ENCODE measurements at regions of chr7 and their contacts with region 1.

Region 1: DNA sequence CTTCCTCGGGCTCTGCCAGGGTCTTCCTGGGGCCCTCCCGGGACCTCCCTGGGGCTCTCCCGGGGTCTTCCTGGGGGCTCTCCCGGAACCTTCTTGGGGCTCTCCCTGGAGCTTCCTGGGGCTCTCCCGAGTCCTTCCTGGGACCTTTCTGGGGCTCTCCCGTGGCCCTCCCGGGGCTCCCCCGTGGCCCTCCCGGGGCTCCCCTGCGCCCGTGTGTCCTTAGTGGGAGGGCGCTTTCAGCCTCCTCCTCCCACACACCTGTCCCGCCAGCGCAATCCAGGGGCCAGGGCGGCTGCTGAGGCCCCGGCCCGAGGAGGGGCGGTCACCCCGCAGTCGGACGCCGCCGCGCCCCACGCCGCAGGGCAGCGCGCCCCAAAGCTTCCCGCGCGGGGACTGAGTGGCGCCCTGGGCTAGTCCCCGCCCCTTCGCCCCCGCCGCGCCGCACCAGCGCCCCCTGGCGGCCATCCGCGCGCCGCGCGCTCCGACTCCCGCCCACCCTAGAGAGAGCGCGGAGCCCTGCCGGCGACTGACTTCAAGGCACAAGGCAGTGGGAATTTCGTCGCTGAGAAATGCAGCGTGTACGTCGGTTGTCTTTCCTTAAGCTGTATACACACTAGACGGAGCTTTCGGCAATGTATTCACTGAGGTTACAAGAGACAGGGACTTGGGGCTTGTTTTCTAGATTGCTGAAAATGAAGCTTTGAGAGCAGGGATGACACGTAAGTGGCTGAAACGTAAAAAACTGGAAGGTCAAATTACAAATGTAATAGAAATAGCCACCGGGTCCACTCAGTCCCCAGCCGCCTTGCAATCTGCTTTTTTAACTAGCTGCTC is 47.1 kb downstream of the INSIG1 start:
- DNase-seq: peak; percentile 82 to 84 (median 83)
- ATAC-seq: peak; percentile 93 to 99 (median 97)
- H3K4me3 ChIP-seq: peak overlapping the region; percentile 32 to 56 (median 49)
- H3K27ac ChIP-seq: no peak overlapping the region
- H3K4me1 ChIP-seq: peaks cover 0 to 10% (median 0%) of the 10 kb centered on the region in 4 donors
- H3K27me3 ChIP-seq: no peaks in the 10 kb centered on the region
- CTCF ChIP-seq: peak; percentile 78 to 97 (median 88)
- POLR2A ChIP-seq: no peak

Region 2: GRCh38 chr7:154913638-154914312 is 431.0 kb before region 1 on chr7:
- intact Hi-C with region 1: loop called (anchors 5 to 10 kb)
- DNase-seq: peak; percentile 91 to 93 (median 91)
- ATAC-seq: peak; percentile 97 to 100 (median 99)
- H3K4me3 ChIP-seq: peak overlapping the region in 2 of 3 donors; percentile 10 to 15
- H3K27ac ChIP-seq: no peak overlapping the region
- H3K4me1 ChIP-seq: peaks cover 0 to 9% (median 0%) of the 10 kb centered on the region in 4 donors
- H3K27me3 ChIP-seq: no peaks in the 10 kb centered on the region
- CTCF ChIP-seq: peak; percentile 91 to 96 (median 92)
- POLR2A ChIP-seq: no peak

Region 3: GRCh38 chr7:155190688-155191087 is 154.1 kb before region 1 on chr7:
- intact Hi-C with region 1: loop called (anchors 5 to 10 kb)
- DNase-seq: peak in 2 of 3 donors; percentile 59 to 67
- ATAC-seq: peak; percentile 91 to 98 (median 96)
- H3K4me3 ChIP-seq: peak overlapping the region in 2 of 3 donors; percentile 15 to 38
- H3K27ac ChIP-seq: no peak overlapping the region
- H3K4me1 ChIP-seq: peaks cover 0 to 9% (median 0%) of the 10 kb centered on the region in 4 donors
- H3K27me3 ChIP-seq: no peaks in the 10 kb centered on the region
- CTCF ChIP-seq: peak; percentile 77 to 94 (median 79)
- POLR2A ChIP-seq: no peak

Measured in right lobe of liver (tissue), 6 donors.